ENCODE measurements at regions of chr22 and their contacts with region 1.

Region 1: GRCh38 chr22:30591588-30592359 is at the start of gene PES1:
- DNase-seq: peak; percentile 96
- H3K4me3 ChIP-seq: peak within 1 kb of the TSS; percentile 65 to 94 (median 84)
- H3K27ac ChIP-seq: peak within 1 kb of the TSS; percentile 97
- H3K4me1 ChIP-seq: peaks cover 11% of the 10 kb centered on the region
- H3K27me3 ChIP-seq: no peaks in the 10 kb centered on the region
- CTCF ChIP-seq: no peak
- total RNA-seq, gene PES1: 52.2 to 99.1 TPM

Region 2: DNA sequence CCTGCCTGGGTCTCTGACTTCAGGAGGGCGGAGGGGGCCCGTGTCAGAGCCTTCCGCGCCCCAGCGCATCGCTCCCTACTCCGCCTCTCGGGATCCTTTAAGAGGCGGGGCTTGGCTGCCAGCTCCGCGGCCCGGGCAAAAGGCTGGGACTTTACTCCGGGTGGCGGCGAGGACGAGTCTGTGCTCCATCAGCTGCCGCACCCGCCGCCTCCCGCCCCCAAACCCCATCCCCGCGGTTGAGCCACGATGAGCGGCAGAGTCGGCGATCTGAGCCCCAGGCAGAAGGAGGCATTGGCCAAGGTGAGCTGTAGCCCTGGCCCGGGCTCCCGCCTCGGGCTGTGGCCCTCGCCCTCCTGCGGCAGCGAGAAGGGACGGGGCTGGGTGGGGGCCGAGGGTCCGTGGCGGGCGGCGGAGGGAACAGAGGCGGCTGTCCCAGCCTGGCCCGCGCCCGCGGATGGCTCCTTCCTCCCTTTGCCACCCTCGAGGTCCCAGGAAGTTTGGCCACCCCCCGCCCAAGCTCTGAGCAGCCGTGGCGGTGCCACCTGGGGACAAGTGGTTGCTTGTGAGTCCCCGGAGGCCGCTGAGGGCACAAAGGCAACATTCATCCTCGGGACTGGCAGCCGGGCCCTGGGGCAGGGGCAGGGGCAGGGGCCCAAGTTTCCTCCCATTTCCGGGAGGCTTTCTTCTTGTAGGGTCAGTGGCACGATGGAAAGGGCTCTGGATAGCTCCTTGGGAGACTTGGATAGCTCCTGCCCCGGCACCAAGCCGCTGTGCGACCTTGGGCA is 194.7 kb before region 1 on chr22 and contains the start of gene SEC14L2:
- CTCF ChIA-PET with region 1: no interaction called
- dilution Hi-C with region 1: no loop called
- in situ Hi-C with region 1: no loop called
- intact Hi-C with region 1: loop called (anchors 2 kb)
- DNase-seq: peak; percentile 57
- H3K4me3 ChIP-seq: peak within 1 kb of the TSS; percentile 60 to 94 (median 78)
- H3K27ac ChIP-seq: peak within 1 kb of the TSS; percentile 80
- H3K4me1 ChIP-seq: peaks cover 34% of the 10 kb centered on the region
- H3K27me3 ChIP-seq: no peaks in the 10 kb centered on the region
- CTCF ChIP-seq: no peak
- total RNA-seq, gene SEC14L2: 171 to 266 TPM

Region 3: GRCh38 chr22:30717331-30717921 is 125.7 kb after region 1 on chr22:
- CTCF ChIA-PET with region 1: no interaction called
- dilution Hi-C with region 1: no loop called
- in situ Hi-C with region 1: no loop called
- intact Hi-C with region 1: loop called (anchors 2 kb)
- DNase-seq: peak; percentile 85
- H3K4me3 ChIP-seq: no peak overlapping the region
- H3K27ac ChIP-seq: peak overlapping the region; percentile 8
- H3K4me1 ChIP-seq: peaks cover 20% of the 10 kb centered on the region
- H3K27me3 ChIP-seq: no peaks in the 10 kb centered on the region
- CTCF ChIP-seq: no peak